ENCODE measurements at regions of chr2 and their contacts with region 1.

Region 1: DNA sequence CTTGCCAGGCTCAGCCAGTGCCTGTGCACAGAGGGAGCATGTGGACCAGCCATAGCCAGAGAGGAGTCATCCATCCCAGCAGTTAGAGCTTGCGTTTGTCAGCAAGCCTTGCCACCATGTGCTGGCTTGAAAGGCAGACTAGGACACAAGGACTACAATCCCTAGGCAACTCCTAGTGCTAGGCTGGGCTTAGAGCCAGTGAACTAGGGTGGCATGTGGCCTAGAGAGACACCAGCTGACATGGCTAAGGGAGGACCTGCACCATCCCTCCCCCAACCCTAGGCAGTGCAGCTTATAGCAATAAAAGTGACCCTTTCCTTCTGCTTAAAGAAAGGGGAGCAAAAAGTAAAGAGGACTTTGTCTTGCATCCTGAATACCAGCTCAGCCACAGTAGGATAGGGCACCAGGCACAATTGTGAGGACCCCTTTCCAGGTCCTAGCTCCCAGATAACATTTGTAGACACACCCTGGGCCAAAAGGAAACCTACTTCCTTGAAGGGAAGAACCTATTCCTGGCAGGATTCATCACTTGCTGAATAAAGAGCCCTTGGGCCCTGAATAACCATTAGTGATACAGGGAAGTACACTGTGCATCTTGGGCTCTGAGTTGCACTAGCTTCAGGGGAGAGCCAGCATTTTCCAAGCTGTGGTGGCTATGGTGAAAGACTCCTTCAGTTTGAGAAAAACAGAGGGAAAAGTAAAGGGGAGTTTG is 38.7 kb upstream of the UXS1 start:
- DNase-seq: no peak
- ATAC-seq: no peak
- H3K4me3 ChIP-seq: no peak overlapping the region
- H3K27ac ChIP-seq: no peak overlapping the region
- H3K4me1 ChIP-seq: no peaks in the 10 kb centered on the region
- H3K27me3 ChIP-seq: no peaks in the 10 kb centered on the region
- CTCF ChIP-seq: no peak

Region 2: GRCh38 chr2:106107509-106108131 is 125.2 kb before region 1 on chr2:
- intact Hi-C with region 1: no loop called
- DNase-seq: no peak
- ATAC-seq: peak; percentile 26
- H3K4me3 ChIP-seq: no peak overlapping the region
- H3K27ac ChIP-seq: no peak overlapping the region
- H3K4me1 ChIP-seq: no peaks in the 10 kb centered on the region
- H3K27me3 ChIP-seq: no peaks in the 10 kb centered on the region
- CTCF ChIP-seq: no peak

Region 3: DNA sequence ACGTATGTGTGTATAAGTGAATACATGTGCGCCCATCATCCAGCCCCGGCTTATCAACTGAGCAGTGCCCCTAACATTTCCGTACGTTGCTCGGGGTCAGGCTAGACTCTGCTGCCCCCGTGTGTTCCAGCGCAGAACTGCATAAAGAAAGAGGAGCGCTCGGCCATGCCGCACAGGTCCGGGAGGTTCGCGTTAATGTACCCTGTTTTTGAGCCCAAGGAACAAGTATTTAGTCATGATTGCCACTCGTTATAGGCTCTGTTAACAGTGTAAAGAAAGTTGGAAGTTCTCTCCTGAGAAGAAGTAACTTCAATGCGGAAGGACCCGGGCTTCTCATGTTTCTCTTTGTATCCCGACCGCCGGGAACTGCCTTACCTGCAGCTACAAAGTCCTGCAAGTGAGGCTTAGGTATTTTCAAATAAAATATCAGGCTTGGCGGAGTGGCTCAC is 310.0 kb after region 1 on chr2:
- intact Hi-C with region 1: loop called (anchors 5 kb)
- DNase-seq: peak; percentile 78
- ATAC-seq: peak; percentile 95
- H3K4me3 ChIP-seq: peak overlapping the region; percentile 26
- H3K27ac ChIP-seq: no peak overlapping the region
- H3K4me1 ChIP-seq: no peaks in the 10 kb centered on the region
- H3K27me3 ChIP-seq: peaks cover 7% of the 10 kb centered on the region
- CTCF ChIP-seq: peak; percentile 97